GM13976 (cell line): ENCODE measurements at regions of chr1 and their contacts with region 1.

Region 1: DNA sequence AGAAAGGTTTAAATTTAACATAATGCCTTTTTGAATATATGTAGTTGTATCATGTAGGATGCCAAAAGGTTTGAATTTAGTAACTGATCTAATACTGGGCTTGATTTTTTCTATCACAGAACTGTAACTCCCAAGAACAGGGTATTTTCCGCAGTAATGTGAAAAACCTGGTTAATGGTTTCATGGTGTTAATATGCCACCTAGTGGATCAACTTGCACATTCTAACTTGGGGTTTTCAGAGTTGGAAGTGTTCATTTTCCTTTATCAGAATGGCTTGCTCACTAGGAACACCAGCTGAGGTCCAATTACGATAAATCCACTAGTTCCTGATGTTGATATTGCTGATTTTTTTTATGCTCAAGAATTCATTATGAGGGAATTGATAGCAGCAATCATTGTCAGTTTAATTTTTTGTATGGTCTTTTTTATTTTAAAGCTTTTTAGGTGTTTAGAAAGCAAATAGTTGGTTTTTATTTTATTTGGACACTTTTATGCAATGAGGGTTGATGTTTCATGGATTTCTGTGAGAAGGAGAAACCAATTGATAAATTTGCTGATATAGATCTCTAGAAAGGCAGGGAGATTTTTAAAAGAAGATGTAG is 157.2 kb downstream of the PLA2G4A start:
- DNase-seq: peak; percentile 37
- CTCF ChIP-seq: peak; percentile 61

Region 2: DNA sequence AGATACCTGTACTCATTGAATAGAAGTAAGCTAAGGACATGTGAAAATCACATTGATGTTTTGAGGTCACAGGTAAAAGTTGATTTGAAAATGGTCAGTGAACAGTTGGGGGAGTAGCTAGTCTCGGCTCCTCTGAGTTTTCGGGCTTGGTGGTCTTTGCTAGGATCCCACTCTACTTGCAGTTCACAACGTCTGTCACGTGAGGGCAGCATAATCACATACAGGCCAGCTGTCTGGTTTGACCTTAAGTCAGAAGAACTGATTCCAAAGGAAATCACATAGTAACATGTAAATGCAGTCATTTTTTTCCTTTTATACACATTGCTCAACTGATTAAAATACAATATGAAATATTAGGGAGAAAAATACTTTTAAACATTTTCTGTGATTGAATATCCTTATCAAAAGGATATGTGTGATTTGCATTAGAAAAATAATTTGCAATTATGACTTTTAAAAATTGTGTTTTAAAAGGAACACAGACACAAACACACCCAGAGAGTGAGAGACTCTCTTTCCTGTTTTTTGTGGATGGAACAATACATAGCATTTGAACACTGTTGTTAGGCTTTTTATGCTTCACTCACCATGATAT is 503.2 kb before region 1 on chr1:
- in situ Hi-C with region 1: loop called (anchors 10 kb)
- DNase-seq: peak; percentile 51
- CTCF ChIP-seq: peak; percentile 89

Region 3: DNA sequence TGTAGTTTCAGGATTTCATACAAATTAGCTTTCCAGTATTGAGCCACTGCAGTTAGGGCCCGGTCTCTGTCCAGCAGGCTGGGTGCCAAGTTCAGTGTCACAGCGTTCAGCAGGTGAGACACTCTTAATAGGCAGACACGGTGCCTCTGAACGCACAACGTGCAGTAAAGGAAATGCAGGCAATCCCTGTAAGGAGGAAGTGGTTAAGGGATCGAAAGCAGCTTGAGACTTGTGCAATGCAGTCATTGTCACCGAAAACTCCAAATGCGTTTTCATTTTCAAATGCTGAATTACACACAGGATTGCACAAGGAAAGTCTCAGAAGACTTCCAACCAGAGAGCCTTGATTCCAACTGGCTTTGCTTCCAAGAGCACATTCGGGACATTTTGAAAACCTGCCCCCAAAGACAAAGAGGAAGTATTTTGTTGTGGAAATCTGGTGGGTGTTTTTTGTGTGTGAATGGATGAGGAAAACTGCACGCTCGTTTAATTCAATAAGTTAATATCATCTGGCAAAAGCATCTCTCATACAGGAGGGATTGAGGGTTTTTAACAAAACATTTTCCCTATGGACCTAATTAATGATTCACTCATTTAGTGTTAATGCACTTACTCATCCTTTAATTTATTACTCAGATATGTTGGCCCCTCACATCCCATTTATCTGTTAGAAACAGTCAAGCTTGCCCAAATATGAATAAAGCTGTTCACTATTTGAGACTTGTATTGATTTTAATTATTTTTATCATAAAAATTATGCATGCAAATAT is 367.4 kb before region 1 on chr1:
- in situ Hi-C with region 1: loop called (anchors 10 kb)
- DNase-seq: peak; percentile 74
- CTCF ChIP-seq: no peak